ENCODE measurements at regions of chr17 and their contacts with region 1.

Region 1: GRCh38 chr17:51035431-51035830 is 85.2 kb downstream of the SPAG9 start:
- DNase-seq: no peak
- ATAC-seq: peak; percentile 40
- H3K4me3 Mint-ChIP-seq: no peak overlapping the region
- H3K27ac Mint-ChIP-seq: no peak overlapping the region
- H3K4me1 Mint-ChIP-seq: peaks cover 28% of the 10 kb centered on the region
- H3K27me3 Mint-ChIP-seq: no peaks in the 10 kb centered on the region
- CTCF ChIP-seq: no peak

Region 2: DNA sequence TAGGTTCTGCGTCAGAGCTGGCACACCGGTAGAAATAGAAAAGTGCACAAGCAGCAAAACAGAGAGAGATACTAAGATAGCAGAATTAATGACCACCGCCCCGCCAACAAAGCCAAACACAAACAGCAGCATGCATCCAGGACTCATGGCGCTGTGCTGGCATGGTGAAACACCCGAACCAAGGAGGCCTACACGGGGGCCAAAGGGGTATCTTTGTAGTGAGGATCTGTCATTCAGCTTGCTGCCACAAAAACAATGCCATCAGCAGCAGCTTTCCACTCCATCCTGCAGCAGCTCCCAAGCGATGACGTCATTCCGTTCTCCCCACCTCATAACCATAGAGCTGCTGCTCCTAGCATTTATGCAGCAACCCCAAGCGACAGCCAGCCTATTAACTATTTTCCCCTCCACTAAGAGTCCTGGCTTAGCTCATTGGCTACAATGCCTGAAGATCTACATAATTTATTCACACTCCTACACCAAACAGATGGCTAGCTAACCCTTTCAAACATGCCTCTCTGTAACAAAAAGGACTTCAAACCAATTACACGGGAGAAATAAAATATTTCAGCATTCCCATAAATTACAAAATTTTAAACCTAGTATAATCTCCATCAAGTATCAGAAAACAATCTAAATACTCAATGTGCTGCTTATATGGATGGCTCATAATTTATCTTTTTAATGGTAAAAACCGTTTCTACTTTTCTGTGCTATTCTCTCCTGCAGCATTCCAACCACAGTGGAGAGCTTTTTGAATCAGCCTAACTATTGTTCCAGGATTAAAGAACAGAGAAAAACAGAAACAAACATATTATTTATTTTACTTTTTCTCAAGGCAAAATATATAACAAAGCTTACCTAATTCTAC is 11.3 kb after region 1 on chr17:
- CTCF ChIA-PET with region 1: no interaction called
- POLR2A ChIA-PET with region 1: no interaction called
- intact Hi-C with region 1: loop called (anchors 2 kb)
- DNase-seq: no peak
- ATAC-seq: no peak
- H3K4me3 Mint-ChIP-seq: no peak overlapping the region
- H3K27ac Mint-ChIP-seq: no peak overlapping the region
- H3K4me1 Mint-ChIP-seq: peaks cover 26% of the 10 kb centered on the region
- H3K27me3 Mint-ChIP-seq: no peaks in the 10 kb centered on the region
- CTCF ChIP-seq: no peak

Region 3: DNA sequence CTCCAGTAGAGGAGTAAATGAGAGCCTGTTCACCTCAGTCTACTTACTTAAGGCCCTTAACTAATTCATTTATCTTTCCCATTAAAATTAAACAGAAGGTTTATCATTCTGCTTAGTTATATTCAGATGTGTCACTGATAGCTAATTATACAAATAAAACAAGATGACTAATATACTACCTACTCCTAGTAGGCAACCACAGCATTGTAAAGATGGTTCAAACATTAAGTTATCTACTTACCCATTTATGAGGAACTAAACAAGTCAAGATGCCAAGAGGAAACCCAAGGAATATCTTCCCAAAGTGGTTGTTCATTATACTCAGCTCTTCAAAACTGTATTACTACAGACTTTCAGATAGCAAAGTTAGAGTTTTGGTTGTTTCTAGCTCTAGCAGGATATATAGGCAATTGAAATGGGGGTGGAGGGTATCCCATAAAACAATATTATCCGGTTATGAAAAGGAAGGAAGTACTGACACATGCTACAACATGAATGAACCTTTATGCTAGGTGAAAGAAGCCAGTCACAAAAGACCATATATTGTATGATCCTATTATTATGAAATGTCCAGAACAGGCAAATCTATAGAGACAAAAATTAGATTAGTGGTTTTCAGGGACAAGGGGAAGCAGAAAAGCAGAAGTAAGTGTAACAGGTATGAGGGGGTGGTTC is 28.8 kb after region 1 on chr17:
- CTCF ChIA-PET with region 1: no interaction called
- POLR2A ChIA-PET with region 1: no interaction called
- intact Hi-C with region 1: no loop called
- DNase-seq: no peak
- ATAC-seq: no peak
- H3K4me3 Mint-ChIP-seq: no peak overlapping the region
- H3K27ac Mint-ChIP-seq: no peak overlapping the region
- H3K4me1 Mint-ChIP-seq: peaks cover 12% of the 10 kb centered on the region
- H3K27me3 Mint-ChIP-seq: no peaks in the 10 kb centered on the region
- CTCF ChIP-seq: no peak

Measured in activated B cell treated with CpG ODN at 0.5 μM for 24 hours (primary cell).